Activated CD4-positive, alpha-beta memory T cell treated with anti-CD3 and anti-CD28 coated beads for 36 hours (primary cell): ENCODE measurements at regions of chr20 and their contacts with region 1.

Region 1: DNA sequence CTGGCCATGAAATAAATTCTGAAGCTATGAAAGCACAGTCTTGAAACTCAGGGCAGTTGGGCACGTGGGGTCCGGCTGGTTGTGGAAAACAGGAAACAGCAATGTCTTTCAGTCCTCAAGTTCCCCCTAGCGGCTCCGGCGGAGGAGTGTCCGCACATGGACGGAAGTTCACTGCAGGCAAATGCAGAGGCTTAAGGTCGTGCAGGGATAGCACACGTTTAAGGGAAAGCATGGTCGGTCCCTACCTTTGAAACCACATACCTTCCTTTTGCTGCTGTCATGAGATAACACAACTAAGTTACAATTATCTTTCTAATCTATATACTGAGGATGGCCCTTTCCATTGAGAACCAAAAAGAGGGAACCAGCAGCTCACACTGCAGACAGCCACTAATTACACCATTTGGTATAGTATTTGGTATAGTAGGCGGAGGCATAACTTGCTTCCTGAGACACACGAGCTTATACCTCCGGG is 52.6 kb upstream of the NFATC2 start:
- DNase-seq: peak; percentile 88
- H3K4me3 Mint-ChIP-seq: no peak overlapping the region
- H3K27ac Mint-ChIP-seq: peak overlapping the region; percentile 62
- H3K4me1 Mint-ChIP-seq: peaks cover 56% of the 10 kb centered on the region
- H3K27me3 Mint-ChIP-seq: peaks cover 12% of the 10 kb centered on the region

Region 2: DNA sequence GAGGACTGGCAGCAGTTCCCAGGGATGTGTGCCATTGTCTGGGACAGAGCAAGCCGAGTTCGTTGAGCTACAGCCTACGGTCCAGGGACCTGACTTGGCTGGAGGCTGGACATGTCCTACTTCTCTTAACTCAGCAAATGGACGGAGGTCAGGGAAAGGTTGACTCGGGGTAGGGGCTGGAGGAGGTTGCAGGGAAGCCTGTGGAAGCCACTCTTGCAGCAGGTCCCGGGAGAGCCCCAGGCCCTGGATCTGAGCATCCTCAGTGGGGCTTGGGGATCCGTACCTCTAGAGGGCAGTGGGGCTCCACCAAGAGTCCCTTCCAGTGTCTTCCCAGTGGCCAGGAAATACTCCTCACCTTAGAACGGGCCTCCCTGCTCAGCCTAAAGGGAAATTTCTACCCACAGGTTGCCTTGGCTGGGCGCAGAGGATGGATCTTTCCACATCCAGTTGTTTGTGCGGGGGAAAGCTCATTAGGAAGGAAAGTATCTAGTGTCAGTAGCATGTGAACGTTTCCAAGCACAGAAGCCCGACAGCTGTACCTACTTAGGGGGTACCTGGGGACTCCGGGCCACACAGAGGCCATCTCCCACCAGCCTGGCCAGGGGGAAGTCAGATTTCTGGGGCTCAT is 222.8 kb before region 1 on chr20:
- CTCF ChIA-PET with region 1: interaction called, 49 read pairs
- POLR2A ChIA-PET with region 1: no interaction called
- intact Hi-C with region 1: no loop called
- DNase-seq: peak; percentile 74
- H3K4me3 Mint-ChIP-seq: no peak overlapping the region
- H3K27ac Mint-ChIP-seq: no peak overlapping the region
- H3K4me1 Mint-ChIP-seq: peaks cover 4% of the 10 kb centered on the region
- H3K27me3 Mint-ChIP-seq: no peaks in the 10 kb centered on the region

Region 3: GRCh38 chr20:51404298-51405060 is 190.6 kb before region 1 on chr20:
- CTCF ChIA-PET with region 1: interaction called, 16 read pairs
- POLR2A ChIA-PET with region 1: interaction called, 3 read pairs
- intact Hi-C with region 1: no loop called
- DNase-seq: peak; percentile 97
- H3K4me3 Mint-ChIP-seq: peak overlapping the region; percentile 17
- H3K27ac Mint-ChIP-seq: peak overlapping the region; percentile 99
- H3K4me1 Mint-ChIP-seq: peaks cover 93% of the 10 kb centered on the region
- H3K27me3 Mint-ChIP-seq: no peaks in the 10 kb centered on the region

Region 4: GRCh38 chr20:51500311-51500710 is 94.8 kb before region 1 on chr20:
- CTCF ChIA-PET with region 1: interaction called, 6 read pairs
- POLR2A ChIA-PET with region 1: no interaction called
- intact Hi-C with region 1: loop called (anchors 5 kb)
- DNase-seq: peak; percentile 68
- H3K4me3 Mint-ChIP-seq: no peak overlapping the region
- H3K27ac Mint-ChIP-seq: peak overlapping the region; percentile 94
- H3K4me1 Mint-ChIP-seq: peaks cover 73% of the 10 kb centered on the region
- H3K27me3 Mint-ChIP-seq: no peaks in the 10 kb centered on the region

Region 5: GRCh38 chr20:51584737-51585136 is 10.4 kb before region 1 on chr20:
- CTCF ChIA-PET with region 1: interaction called, 11 read pairs
- POLR2A ChIA-PET with region 1: no interaction called
- intact Hi-C with region 1: no loop called
- DNase-seq: no peak
- H3K4me3 Mint-ChIP-seq: no peak overlapping the region
- H3K27ac Mint-ChIP-seq: no peak overlapping the region
- H3K4me1 Mint-ChIP-seq: peaks cover 3% of the 10 kb centered on the region
- H3K27me3 Mint-ChIP-seq: no peaks in the 10 kb centered on the region

Region 6: GRCh38 chr20:51624157-51624731 is 29.1 kb after region 1 on chr20:
- CTCF ChIA-PET with region 1: interaction called, 23 read pairs
- POLR2A ChIA-PET with region 1: no interaction called
- intact Hi-C with region 1: no loop called
- DNase-seq: peak; percentile 85
- H3K4me3 Mint-ChIP-seq: no peak overlapping the region
- H3K27ac Mint-ChIP-seq: no peak overlapping the region
- H3K4me1 Mint-ChIP-seq: peaks cover 38% of the 10 kb centered on the region
- H3K27me3 Mint-ChIP-seq: peaks cover 4% of the 10 kb centered on the region

Region 7: GRCh38 chr20:51995551-51995951 is 400.5 kb after region 1 on chr20:
- CTCF ChIA-PET with region 1: no interaction called
- POLR2A ChIA-PET with region 1: no interaction called
- intact Hi-C with region 1: no loop called
- DNase-seq: no peak
- H3K4me3 Mint-ChIP-seq: no peak overlapping the region
- H3K27ac Mint-ChIP-seq: no peak overlapping the region
- H3K4me1 Mint-ChIP-seq: no peaks in the 10 kb centered on the region
- H3K27me3 Mint-ChIP-seq: peaks cover 4% of the 10 kb centered on the region

Region 8: GRCh38 chr20:52364405-52364804 is 769.3 kb after region 1 on chr20:
- CTCF ChIA-PET with region 1: no interaction called
- POLR2A ChIA-PET with region 1: no interaction called
- intact Hi-C with region 1: no loop called
- DNase-seq: no peak
- H3K4me3 Mint-ChIP-seq: no peak overlapping the region
- H3K27ac Mint-ChIP-seq: no peak overlapping the region
- H3K4me1 Mint-ChIP-seq: peaks cover 8% of the 10 kb centered on the region
- H3K27me3 Mint-ChIP-seq: peaks cover 4% of the 10 kb centered on the region